Calu3 (cell line): ENCODE measurements at regions of chr1 and their contacts with region 1.

Region 1: GRCh38 chr1:22184892-22185612 is 42.2 kb upstream of the WNT4 start:
- DNase-seq: peak; percentile 44
- H3K4me3 Mint-ChIP-seq: no peak overlapping the region
- H3K27ac Mint-ChIP-seq: no peak overlapping the region
- H3K4me1 Mint-ChIP-seq: no peaks in the 10 kb centered on the region
- H3K27me3 Mint-ChIP-seq: peaks cover 27% of the 10 kb centered on the region
- CTCF ChIP-seq: no peak

Region 2: DNA sequence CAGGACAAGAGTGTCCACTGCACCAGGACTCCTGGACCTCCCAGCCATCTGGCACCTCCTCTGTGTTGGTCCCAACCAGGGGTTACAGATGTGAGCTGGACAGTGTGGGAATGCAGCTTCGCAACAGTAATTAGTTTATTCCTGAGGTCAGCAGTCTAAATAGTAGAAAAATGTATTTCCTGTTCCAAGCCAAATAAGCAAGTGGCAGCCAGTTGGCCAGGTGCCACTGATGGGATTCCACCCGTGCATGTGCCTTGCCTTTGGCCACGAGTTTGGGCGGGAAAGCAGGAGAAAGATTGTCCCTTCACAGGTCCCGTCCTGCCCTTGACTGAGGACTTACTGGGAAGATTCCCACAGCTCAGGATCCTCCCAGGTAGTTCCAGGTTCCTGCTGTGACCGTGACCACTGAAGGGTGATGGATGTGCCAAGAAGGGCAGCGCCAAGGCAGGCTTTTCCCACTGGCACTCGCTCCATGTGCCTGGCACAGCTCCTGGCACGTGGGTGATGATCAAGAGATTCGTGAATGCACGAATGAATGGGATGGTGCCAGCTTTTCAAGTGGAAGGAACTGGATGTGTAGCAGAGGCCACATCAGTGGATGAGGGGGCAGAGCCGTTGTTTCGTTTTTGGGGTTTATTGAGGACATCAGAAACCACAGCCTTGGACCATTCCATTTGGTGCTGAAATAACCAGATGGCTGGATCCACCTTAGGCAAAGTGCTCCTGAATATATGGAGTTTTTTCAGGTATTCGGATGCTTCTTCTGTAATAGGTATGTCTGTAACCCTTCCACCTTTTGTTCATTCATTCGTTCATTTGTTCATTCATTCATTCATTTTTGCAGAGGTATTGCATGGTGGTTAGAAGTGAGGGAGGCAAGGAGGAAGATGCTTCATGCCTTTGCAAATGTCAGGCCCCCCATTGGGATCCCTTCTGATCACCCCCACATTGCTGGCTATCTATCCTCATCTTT is 20.2 kb after region 1 on chr1:
- CTCF ChIA-PET with region 1: interaction called, 12 read pairs
- intact Hi-C with region 1: no loop called
- DNase-seq: no peak
- H3K4me3 Mint-ChIP-seq: no peak overlapping the region
- H3K27ac Mint-ChIP-seq: no peak overlapping the region
- H3K4me1 Mint-ChIP-seq: peaks cover 9% of the 10 kb centered on the region
- H3K27me3 Mint-ChIP-seq: peaks cover 67% of the 10 kb centered on the region
- CTCF ChIP-seq: no peak

Region 3: DNA sequence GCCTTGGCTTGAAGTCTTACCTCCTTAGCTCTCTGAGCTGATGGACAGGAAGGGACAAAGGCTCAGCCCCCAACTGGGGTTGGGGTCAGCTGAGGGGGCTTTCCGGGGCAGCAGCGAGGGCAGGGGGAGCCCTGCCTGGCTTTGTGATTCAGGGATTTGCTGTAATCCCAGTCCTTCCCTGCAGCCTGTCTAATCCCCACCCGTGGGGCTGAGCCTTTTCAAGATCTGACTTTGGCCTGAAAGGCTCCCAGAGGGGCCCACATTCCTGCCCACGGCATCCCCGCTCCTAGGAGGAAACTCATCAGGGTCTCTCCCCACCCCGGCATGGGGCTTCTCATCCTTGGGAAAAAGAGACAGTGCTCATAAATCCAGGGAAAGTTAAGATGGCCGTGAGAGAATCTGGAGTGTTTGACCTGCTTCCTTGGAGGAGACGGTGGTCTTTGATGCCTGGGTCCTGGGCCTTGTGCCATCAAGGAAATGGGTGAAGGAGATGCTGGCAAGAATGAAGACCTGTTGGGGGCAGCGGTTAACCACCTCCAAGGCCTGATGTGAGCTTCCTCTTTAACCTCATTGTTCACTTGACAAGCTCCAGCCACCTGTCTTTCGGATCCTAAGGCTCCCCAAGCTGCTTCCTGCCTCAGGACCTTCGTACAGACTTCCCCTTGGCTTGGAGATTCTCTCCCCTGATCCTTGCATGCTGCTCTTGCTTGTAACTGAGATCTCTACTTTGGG is 41.0 kb after region 1 on chr1:
- CTCF ChIA-PET with region 1: no interaction called
- intact Hi-C with region 1: no loop called
- DNase-seq: no peak
- H3K4me3 Mint-ChIP-seq: no peak overlapping the region
- H3K27ac Mint-ChIP-seq: no peak overlapping the region
- H3K4me1 Mint-ChIP-seq: peaks cover 26% of the 10 kb centered on the region
- H3K27me3 Mint-ChIP-seq: peaks cover 18% of the 10 kb centered on the region
- CTCF ChIP-seq: no peak

Region 4: GRCh38 chr1:22250724-22251123 is 65.7 kb after region 1 on chr1:
- CTCF ChIA-PET with region 1: no interaction called
- intact Hi-C with region 1: no loop called
- DNase-seq: no peak
- H3K4me3 Mint-ChIP-seq: no peak overlapping the region
- H3K27ac Mint-ChIP-seq: no peak overlapping the region
- H3K4me1 Mint-ChIP-seq: peaks cover 14% of the 10 kb centered on the region
- H3K27me3 Mint-ChIP-seq: peaks cover 68% of the 10 kb centered on the region
- CTCF ChIP-seq: no peak